MCF 10A (cell line): ENCODE measurements at regions of chr15 and their contacts with region 1.

Region 1: GRCh38 chr15:88657326-88658069 is 18.7 kb downstream of the ISG20 start:
- DNase-seq: peak; percentile 65
- H3K4me3 Mint-ChIP-seq: no peak overlapping the region
- H3K27ac Mint-ChIP-seq: no peak overlapping the region
- H3K4me1 Mint-ChIP-seq: peaks cover 50% of the 10 kb centered on the region
- H3K27me3 Mint-ChIP-seq: no peaks in the 10 kb centered on the region
- CTCF ChIP-seq: peak; percentile 85

Region 2: DNA sequence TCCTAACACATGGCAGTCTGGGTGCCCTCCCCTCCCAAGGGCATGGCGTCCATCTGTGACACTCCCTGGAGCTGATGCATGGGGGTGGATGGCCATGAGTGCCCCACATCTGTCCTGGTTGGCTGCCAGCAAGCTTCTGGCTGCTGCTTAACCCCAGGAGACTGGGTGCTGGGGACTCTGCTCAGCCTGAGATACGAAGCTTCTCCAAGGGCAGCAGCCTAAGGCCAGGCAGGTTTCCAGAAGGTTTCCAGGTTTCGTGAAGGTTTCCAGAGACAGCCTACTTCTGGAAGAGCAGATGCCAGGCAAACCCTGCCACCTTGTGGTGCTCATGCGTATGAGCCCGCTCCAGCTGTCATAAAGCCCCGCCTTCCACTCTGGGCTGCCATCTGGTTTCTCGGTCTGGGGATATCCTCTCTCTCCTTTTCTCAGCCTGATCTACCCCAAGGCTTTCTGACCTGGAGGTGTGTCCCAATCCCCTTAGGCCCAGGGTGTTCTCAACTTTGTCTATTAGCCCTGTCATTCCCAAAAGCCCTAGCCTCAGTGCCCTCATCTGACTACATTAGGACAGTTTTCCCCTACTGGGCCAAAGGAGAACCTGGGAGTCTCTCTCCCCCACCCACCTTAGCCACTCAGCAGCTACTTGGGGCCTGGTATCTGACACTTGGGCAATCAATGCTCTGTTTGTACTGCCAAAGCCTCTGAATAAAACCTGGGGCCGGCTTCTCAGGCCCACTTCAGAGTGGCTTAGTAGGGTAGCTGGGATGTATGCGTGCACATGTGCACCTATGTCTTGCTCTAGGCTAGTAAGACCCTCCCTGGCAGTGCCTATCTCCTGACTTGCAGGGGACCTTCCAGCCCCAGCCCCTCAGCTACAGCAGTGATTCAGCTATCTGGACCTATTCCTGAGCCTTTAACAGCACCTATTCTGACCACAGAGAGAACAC is 202.4 kb before region 1 on chr15:
- CTCF ChIA-PET with region 1: no interaction called
- POLR2A ChIA-PET with region 1: no interaction called
- intact Hi-C with region 1: no loop called
- DNase-seq: peak; percentile 73
- H3K4me3 Mint-ChIP-seq: no peak overlapping the region
- H3K27ac Mint-ChIP-seq: no peak overlapping the region
- H3K4me1 Mint-ChIP-seq: peaks cover 1% of the 10 kb centered on the region
- H3K27me3 Mint-ChIP-seq: no peaks in the 10 kb centered on the region
- CTCF ChIP-seq: peak; percentile 58

Region 3: DNA sequence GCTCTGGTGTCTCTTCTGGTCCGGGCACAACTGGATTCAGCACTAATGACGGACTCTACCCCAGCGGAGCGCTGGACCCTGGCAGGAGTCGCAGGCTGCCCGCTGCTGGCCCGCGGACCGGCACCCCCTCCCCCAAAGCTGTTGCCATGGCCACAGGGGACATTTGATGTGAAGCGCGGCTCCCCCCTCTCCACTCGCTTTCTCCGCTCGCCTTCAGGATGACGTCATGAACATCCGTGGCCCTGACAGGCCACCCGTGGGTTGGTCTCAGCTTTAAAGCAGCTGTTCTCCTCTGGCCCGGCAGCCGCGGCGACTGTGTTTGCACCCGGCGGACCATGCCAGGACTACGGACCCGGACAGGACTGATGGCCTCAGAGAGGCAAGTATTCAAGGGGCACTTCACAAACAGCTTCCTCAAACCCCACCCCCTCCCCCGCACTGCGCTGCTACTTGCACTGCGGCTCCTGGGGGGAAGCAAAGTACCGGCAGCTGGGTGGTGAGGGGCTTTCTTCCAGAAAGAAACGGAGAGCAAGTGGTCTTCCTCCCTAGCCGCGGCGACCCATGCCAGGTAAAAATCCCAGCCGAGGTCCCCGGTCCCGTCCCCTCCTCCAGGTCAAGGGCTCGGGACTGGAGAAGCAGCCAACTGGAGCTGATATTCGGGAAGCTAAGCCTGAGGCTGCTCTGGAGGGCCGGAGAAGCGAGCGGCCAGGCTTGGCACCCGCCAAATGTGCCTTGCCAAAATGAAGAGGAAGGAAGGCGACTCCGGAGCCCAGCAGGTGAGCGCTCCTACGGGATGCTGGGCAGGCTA is 52.9 kb before region 1 on chr15:
- CTCF ChIA-PET with region 1: no interaction called
- POLR2A ChIA-PET with region 1: no interaction called
- intact Hi-C with region 1: no loop called
- DNase-seq: no peak
- H3K4me3 Mint-ChIP-seq: no peak overlapping the region
- H3K27ac Mint-ChIP-seq: no peak overlapping the region
- H3K4me1 Mint-ChIP-seq: no peaks in the 10 kb centered on the region
- H3K27me3 Mint-ChIP-seq: peaks cover 63% of the 10 kb centered on the region
- CTCF ChIP-seq: no peak

Region 4: DNA sequence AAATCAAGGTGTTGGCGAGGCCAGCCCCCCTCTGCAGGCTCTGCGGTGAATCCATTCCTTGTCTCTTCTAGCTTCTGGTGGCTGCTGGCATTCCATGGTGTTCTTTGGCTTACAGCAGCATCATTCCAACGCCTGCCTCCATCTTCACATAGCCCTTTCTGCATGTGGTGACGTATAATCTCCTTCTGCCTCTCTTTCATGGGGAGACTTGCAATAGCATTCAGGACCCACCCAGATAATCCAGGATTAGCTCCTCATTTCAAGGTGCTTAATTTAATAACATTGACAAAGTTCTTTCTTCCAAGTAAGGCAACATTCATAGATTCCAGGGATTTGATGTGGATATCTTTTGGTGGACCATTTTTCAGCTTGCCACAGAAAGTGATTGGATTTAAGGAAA is 17.2 kb after region 1 on chr15:
- CTCF ChIA-PET with region 1: no interaction called
- POLR2A ChIA-PET with region 1: no interaction called
- intact Hi-C with region 1: no loop called
- DNase-seq: no peak
- H3K4me3 Mint-ChIP-seq: no peak overlapping the region
- H3K27ac Mint-ChIP-seq: no peak overlapping the region
- H3K4me1 Mint-ChIP-seq: peaks cover 7% of the 10 kb centered on the region
- H3K27me3 Mint-ChIP-seq: peaks cover 43% of the 10 kb centered on the region
- CTCF ChIP-seq: no peak

Region 5: DNA sequence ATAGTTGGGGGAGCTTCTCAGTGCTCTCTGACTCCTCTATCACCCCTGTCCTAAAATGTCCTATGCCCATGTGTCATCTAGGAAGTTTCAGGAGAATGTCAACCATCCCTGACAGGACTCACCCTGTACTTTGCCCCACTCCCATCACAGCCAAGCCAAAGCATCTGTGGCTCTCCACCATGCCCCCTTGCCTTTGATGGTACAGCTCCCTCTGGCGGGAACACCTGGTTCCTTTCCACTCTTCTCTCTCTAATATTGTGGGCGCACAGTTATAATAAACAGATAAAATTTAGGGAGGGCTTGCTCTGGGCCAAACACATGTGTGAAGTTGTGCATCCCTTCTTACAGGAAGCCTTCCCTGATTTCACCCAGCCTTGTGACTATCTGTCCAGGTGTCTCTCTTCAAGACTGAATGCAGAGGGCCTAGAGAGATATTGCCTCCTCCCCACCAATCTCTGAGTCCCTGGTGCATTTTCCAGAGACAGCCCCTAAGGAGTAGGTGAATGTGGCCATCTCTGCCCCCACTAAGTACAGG is 44.1 kb after region 1 on chr15:
- CTCF ChIA-PET with region 1: interaction called, 16 read pairs
- POLR2A ChIA-PET with region 1: no interaction called
- intact Hi-C with region 1: loop called (anchors 1 kb)
- DNase-seq: peak; percentile 54
- H3K4me3 Mint-ChIP-seq: no peak overlapping the region
- H3K27ac Mint-ChIP-seq: no peak overlapping the region
- H3K4me1 Mint-ChIP-seq: no peaks in the 10 kb centered on the region
- H3K27me3 Mint-ChIP-seq: no peaks in the 10 kb centered on the region
- CTCF ChIP-seq: peak; percentile 31

Region 6: DNA sequence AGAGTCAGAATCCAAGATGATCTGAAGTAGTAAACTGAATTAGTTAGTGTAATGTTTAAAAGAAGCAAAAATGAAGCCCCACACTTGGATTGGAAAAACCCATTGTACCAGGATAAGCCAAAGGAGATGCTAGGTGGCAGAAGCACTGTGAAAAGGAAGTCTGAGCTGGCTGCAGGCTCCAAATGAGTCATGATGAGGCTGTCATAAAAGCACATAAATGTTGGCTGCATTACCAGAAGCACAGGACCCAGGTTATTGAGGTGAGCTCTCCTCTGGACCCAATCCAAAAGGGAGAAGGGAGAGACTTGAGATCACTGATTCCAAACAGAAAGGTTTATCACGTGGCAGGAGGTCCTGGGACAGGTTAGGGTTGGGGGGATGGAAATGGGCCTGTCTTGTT is 142.5 kb after region 1 on chr15:
- CTCF ChIA-PET with region 1: interaction called, 6 read pairs
- POLR2A ChIA-PET with region 1: no interaction called
- intact Hi-C with region 1: loop called (anchors 10 kb)
- DNase-seq: peak; percentile 83
- H3K4me3 Mint-ChIP-seq: no peak overlapping the region
- H3K27ac Mint-ChIP-seq: no peak overlapping the region
- H3K4me1 Mint-ChIP-seq: peaks cover 12% of the 10 kb centered on the region
- H3K27me3 Mint-ChIP-seq: peaks cover 27% of the 10 kb centered on the region
- CTCF ChIP-seq: no peak

Region 7: DNA sequence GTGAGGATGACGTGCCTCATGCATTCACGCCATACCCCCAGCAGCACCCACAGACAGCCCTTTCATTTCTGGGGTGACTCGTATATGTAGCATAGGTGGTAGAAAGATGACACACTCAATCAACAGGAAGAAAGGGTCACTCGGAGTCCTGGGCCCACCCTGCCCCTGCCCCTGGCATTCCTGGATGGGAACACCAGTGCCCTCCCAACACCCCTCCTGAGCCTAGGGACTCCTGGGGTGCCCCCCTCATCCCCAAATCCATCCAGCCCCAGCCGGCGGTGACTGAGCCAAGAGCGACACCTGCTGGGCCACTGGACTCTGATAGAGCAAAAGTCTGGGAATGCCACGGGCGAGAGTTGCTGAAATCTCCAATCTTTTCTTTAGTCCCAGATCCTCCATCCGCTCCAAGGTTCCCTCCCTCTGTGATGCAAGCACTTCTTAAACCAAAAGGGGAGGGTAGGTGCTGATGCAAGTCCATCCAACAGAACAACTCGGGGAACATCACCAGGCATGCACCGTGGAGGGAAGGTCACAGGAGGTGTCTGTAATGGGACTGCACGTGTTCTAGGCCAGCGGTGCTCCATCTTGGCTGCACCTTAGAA is 176.8 kb after region 1 on chr15:
- CTCF ChIA-PET with region 1: interaction called, 32 read pairs
- POLR2A ChIA-PET with region 1: interaction called, 3 read pairs
- intact Hi-C with region 1: loop called (anchors 1 kb)
- DNase-seq: peak; percentile 30
- H3K4me3 Mint-ChIP-seq: no peak overlapping the region
- H3K27ac Mint-ChIP-seq: no peak overlapping the region
- H3K4me1 Mint-ChIP-seq: peaks cover 9% of the 10 kb centered on the region
- H3K27me3 Mint-ChIP-seq: no peaks in the 10 kb centered on the region
- CTCF ChIP-seq: peak; percentile 49

Region 8: GRCh38 chr15:88878720-88879184 is 221.3 kb after region 1 on chr15:
- CTCF ChIA-PET with region 1: interaction called, 7 read pairs
- POLR2A ChIA-PET with region 1: no interaction called
- intact Hi-C with region 1: loop called (anchors 5 kb)
- DNase-seq: peak; percentile 55
- H3K4me3 Mint-ChIP-seq: no peak overlapping the region
- H3K27ac Mint-ChIP-seq: no peak overlapping the region
- H3K4me1 Mint-ChIP-seq: no peaks in the 10 kb centered on the region
- H3K27me3 Mint-ChIP-seq: no peaks in the 10 kb centered on the region
- CTCF ChIP-seq: peak; percentile 52

Region 9: DNA sequence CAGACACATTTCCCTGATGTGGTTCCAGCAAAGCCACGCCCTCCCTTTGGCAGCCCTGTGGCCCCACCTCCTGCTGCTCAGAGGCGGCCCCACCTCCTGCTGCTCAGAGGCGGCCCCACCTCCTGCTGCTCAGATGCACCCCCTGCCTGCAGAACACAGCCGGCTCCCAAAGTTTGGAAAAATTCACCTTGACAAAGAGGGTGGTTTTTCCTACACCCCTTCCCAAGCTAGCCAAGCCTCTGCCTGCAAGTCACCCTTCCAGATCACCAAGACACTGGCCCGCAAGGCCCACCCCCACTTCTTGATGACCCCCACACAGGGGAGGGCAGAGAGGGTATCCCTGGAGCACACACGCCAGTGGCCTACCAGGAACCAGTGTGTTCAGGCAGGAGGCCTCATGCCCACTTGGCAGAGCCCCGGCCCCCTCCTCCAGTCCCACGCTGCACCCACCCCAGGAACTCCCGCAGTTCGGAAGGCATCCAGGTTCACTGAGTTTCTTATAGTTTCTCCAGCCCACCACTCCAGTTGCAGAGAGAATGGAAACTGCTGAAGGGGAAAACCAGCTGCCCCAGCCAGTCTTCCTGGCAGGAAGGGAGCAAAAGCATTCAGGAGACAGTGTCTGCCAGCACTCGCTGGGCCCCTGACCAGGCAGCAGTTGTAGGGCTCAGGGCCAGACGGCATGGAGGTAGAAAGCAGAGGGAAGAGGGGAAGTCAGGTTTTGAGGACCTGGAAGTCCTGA is 240.1 kb after region 1 on chr15:
- CTCF ChIA-PET with region 1: interaction called, 35 read pairs
- POLR2A ChIA-PET with region 1: interaction called, 4 read pairs
- intact Hi-C with region 1: loop called (anchors 1 kb)
- DNase-seq: peak; percentile 79
- H3K4me3 Mint-ChIP-seq: no peak overlapping the region
- H3K27ac Mint-ChIP-seq: peak overlapping the region; percentile 46
- H3K4me1 Mint-ChIP-seq: peaks cover 19% of the 10 kb centered on the region
- H3K27me3 Mint-ChIP-seq: no peaks in the 10 kb centered on the region
- CTCF ChIP-seq: peak; percentile 45

Region 10: DNA sequence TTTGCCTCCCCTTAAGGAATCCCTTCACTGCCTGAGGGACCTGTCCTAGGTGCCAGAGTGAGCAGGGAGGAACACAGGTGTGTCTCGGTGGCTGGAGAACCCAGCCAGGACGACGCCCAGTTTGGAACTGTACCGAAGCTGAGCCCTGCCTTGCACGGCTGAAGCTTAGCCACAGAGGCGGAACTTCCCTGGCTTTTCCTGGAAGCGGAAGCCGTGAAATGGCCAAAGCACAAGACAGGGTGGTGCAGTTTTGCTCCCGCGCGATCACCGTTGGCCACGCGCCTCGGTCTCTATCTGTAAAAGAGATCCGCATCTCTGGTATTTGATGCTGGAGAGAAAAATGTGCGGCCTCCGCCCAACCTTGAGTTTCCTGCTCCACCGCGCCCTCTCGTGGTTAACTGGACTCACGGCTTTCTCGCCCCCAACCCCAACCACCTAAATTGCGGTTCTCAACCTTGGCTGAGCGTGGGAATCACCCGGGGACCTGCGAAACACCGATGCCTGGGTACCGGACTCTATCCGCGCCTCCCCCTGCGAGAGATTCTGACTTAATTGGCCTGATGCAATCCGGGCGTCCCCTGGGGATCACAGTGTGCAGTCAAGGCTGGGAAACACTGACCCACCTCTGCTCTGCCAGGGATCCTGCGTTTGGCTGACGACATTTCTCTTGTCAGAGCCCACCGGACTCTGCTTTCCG is 360.0 kb after region 1 on chr15:
- CTCF ChIA-PET with region 1: interaction called, 4 read pairs
- POLR2A ChIA-PET with region 1: interaction called, 4 read pairs
- intact Hi-C with region 1: loop called (anchors 1 kb)
- DNase-seq: peak; percentile 88
- H3K4me3 Mint-ChIP-seq: peak overlapping the region; percentile 57
- H3K27ac Mint-ChIP-seq: peak overlapping the region; percentile 72
- H3K4me1 Mint-ChIP-seq: peaks cover 22% of the 10 kb centered on the region
- H3K27me3 Mint-ChIP-seq: no peaks in the 10 kb centered on the region
- CTCF ChIP-seq: peak; percentile 76